Naive thymus-derived CD4-positive, alpha-beta T cell (primary cell): ENCODE measurements at regions of chr3 and their contacts with region 1.

Region 1: GRCh38 chr3:69324362-69325025 is 61.4 kb downstream of the FRMD4B start:
- DNase-seq: no peak
- ATAC-seq: peak; percentile 47
- H3K4me3 ChIP-seq: no peak overlapping the region
- H3K4me3 Mint-ChIP-seq: peak overlapping the region in 1 of 10 donors; percentile 41
- H3K27ac ChIP-seq: no peak overlapping the region
- H3K27ac Mint-ChIP-seq: peak overlapping the region in 6 of 9 donors; percentile 2 to 75 (median 66)
- H3K4me1 ChIP-seq: peaks cover 0 to 17% of the 10 kb centered on the region in 2 donors
- H3K4me1 Mint-ChIP-seq: peaks cover 19 to 49% (median 45%) of the 10 kb centered on the region in 7 donors
- H3K27me3 ChIP-seq: no peaks in the 10 kb centered on the region
- H3K27me3 Mint-ChIP-seq: no peaks in the 10 kb centered on the region

Region 2: GRCh38 chr3:69013253-69014021 is 311.1 kb before region 1 on chr3 and contains the start of gene EOGT:
- CTCF ChIA-PET with region 1: no interaction called
- POLR2A ChIA-PET with region 1: no interaction called
- intact Hi-C with region 1: loop called in 1 of 2 experiments (anchors 10 kb)
- DNase-seq: peak; percentile 59 to 87 (median 66)
- ATAC-seq: peak; percentile 92
- H3K4me3 ChIP-seq: peak within 1 kb of the TSS; percentile 68
- H3K4me3 Mint-ChIP-seq: peak within 1 kb of the TSS; percentile 84 to 95 (median 93)
- H3K27ac ChIP-seq: peak within 1 kb of the TSS; percentile 78
- H3K27ac Mint-ChIP-seq: peak within 1 kb of the TSS; percentile 32 to 94 (median 82)
- H3K4me1 ChIP-seq: peaks cover 0 to 12% of the 10 kb centered on the region in 2 donors
- H3K4me1 Mint-ChIP-seq: peaks cover 10 to 49% (median 26%) of the 10 kb centered on the region in 7 donors
- H3K27me3 ChIP-seq: no peaks in the 10 kb centered on the region
- H3K27me3 Mint-ChIP-seq: no peaks in the 10 kb centered on the region
- total RNA-seq, gene EOGT: 10.1 to 19.1 (median 13.1) TPM

Region 3: GRCh38 chr3:69200384-69201068 is 124.0 kb before region 1 on chr3:
- CTCF ChIA-PET with region 1: no interaction called
- POLR2A ChIA-PET with region 1: no interaction called
- intact Hi-C with region 1: loop called in 1 of 2 experiments (anchors 1 kb)
- DNase-seq: peak in 2 of 9 donors; percentile 6 to 51
- ATAC-seq: no peak
- H3K4me3 ChIP-seq: peak overlapping the region; percentile 70
- H3K4me3 Mint-ChIP-seq: peak overlapping the region; percentile 70 to 91 (median 86)
- H3K27ac ChIP-seq: no peak overlapping the region
- H3K27ac Mint-ChIP-seq: peak overlapping the region; percentile 7 to 93 (median 86)
- H3K4me1 ChIP-seq: peaks cover 14 to 22% of the 10 kb centered on the region in 2 donors
- H3K4me1 Mint-ChIP-seq: peaks cover 13 to 71% (median 43%) of the 10 kb centered on the region in 7 donors
- H3K27me3 ChIP-seq: no peaks in the 10 kb centered on the region
- H3K27me3 Mint-ChIP-seq: no peaks in the 10 kb centered on the region

Region 4: GRCh38 chr3:69368129-69368741 is 43.7 kb after region 1 on chr3:
- CTCF ChIA-PET with region 1: no interaction called
- POLR2A ChIA-PET with region 1: no interaction called
- intact Hi-C with region 1: loop called in 1 of 2 experiments (anchors 2 kb)
- DNase-seq: peak in 3 of 9 donors; percentile 9 to 24 (median 13)
- ATAC-seq: peak; percentile 58
- H3K4me3 ChIP-seq: no peak overlapping the region
- H3K4me3 Mint-ChIP-seq: peak overlapping the region in 4 of 10 donors; percentile 26 to 60 (median 38)
- H3K27ac ChIP-seq: no peak overlapping the region
- H3K27ac Mint-ChIP-seq: peak overlapping the region in 2 of 9 donors; percentile 5 to 26
- H3K4me1 ChIP-seq: peaks cover 20 to 24% of the 10 kb centered on the region in 2 donors
- H3K4me1 Mint-ChIP-seq: peaks cover 17 to 41% (median 32%) of the 10 kb centered on the region in 7 donors
- H3K27me3 ChIP-seq: no peaks in the 10 kb centered on the region
- H3K27me3 Mint-ChIP-seq: peaks cover 0 to 11% (median 7%) of the 10 kb centered on the region in 5 donors

Region 5: DNA sequence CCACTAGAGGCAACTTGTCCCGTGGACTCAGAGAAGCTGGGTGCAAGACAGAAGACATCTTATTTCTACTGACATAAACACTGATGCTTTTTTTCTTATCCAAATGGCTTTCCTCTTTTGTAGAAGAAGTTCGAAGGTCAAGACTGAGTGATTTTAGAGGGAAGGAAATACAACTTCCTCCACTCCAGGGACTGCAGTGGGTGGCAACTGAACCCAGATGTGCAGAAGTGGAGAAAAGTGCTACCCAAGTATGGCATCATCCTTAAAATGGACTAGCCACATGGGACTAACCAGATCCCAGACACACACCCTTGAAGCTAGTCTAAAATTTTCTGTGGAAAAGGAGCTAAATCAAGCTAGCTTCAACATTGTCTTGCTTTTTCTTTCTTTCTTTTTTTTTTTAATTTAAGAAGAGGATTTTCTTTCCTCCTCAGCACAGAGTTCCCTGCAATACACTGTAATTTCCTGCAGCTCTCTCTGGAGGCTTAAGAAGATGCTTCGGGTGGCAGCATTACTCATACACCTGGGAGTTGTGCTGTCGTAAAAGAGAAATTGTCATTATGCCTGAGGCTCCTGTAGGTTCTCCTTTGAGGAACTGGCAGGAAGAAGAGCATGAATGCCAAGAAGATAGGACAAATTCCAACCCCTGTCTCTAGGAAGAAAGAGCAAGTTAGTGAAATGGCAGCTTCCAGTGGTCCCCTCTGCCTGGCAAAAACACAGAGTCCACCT is 65.2 kb after region 1 on chr3:
- CTCF ChIA-PET with region 1: no interaction called
- POLR2A ChIA-PET with region 1: no interaction called
- intact Hi-C with region 1: no loop called
- DNase-seq: no peak
- ATAC-seq: no peak
- H3K4me3 ChIP-seq: no peak overlapping the region
- H3K4me3 Mint-ChIP-seq: no peak overlapping the region
- H3K27ac ChIP-seq: no peak overlapping the region
- H3K27ac Mint-ChIP-seq: no peak overlapping the region
- H3K4me1 ChIP-seq: no peaks in the 10 kb centered on the region
- H3K4me1 Mint-ChIP-seq: peaks cover 5 to 16% (median 12%) of the 10 kb centered on the region in 7 donors
- H3K27me3 ChIP-seq: no peaks in the 10 kb centered on the region
- H3K27me3 Mint-ChIP-seq: peaks cover 41 to 67% (median 44%) of the 10 kb centered on the region in 5 donors

Region 6: GRCh38 chr3:69425261-69425660 is 100.8 kb after region 1 on chr3:
- CTCF ChIA-PET with region 1: no interaction called
- POLR2A ChIA-PET with region 1: no interaction called
- intact Hi-C with region 1: loop called in 1 of 2 experiments (anchors 1 kb)
- DNase-seq: peak in 5 of 9 donors; percentile 3 to 20 (median 10)
- ATAC-seq: no peak
- H3K4me3 ChIP-seq: no peak overlapping the region
- H3K4me3 Mint-ChIP-seq: no peak overlapping the region
- H3K27ac ChIP-seq: no peak overlapping the region
- H3K27ac Mint-ChIP-seq: no peak overlapping the region
- H3K4me1 ChIP-seq: no peaks in the 10 kb centered on the region
- H3K4me1 Mint-ChIP-seq: peaks cover 0 to 5% (median 0%) of the 10 kb centered on the region in 7 donors
- H3K27me3 ChIP-seq: no peaks in the 10 kb centered on the region
- H3K27me3 Mint-ChIP-seq: peaks cover 0 to 4% (median 0%) of the 10 kb centered on the region in 5 donors

Region 7: DNA sequence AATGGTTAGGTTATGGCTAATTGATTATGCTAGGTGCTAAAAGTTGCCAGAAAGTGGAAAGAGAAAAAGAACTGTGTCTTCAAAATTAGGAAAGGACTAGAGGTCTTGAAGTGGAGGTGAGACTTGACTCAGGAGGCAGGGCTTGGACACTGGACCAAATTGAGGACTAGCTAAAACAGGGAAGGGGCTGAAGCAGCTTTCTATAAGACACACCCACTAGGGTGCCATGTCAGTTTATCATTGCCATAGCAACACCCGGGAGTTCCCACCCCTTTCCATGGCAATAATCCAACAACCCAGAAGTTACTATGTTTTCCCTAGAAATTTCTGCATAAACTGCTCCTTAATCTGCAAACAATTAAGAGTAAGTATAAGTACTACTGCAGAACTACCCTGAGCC is 371.9 kb after region 1 on chr3:
- CTCF ChIA-PET with region 1: no interaction called
- POLR2A ChIA-PET with region 1: no interaction called
- intact Hi-C with region 1: no loop called
- DNase-seq: no peak
- ATAC-seq: no peak
- H3K4me3 ChIP-seq: no peak overlapping the region
- H3K4me3 Mint-ChIP-seq: no peak overlapping the region
- H3K27ac ChIP-seq: no peak overlapping the region
- H3K27ac Mint-ChIP-seq: no peak overlapping the region
- H3K4me1 ChIP-seq: no peaks in the 10 kb centered on the region
- H3K4me1 Mint-ChIP-seq: no peaks in the 10 kb centered on the region
- H3K27me3 ChIP-seq: no peaks in the 10 kb centered on the region
- H3K27me3 Mint-ChIP-seq: peaks cover 0 to 10% (median 2%) of the 10 kb centered on the region in 5 donors